CD8-positive, alpha-beta memory T cell (primary cell): ENCODE measurements at regions of chr19 and their contacts with region 1.

Region 1: DNA sequence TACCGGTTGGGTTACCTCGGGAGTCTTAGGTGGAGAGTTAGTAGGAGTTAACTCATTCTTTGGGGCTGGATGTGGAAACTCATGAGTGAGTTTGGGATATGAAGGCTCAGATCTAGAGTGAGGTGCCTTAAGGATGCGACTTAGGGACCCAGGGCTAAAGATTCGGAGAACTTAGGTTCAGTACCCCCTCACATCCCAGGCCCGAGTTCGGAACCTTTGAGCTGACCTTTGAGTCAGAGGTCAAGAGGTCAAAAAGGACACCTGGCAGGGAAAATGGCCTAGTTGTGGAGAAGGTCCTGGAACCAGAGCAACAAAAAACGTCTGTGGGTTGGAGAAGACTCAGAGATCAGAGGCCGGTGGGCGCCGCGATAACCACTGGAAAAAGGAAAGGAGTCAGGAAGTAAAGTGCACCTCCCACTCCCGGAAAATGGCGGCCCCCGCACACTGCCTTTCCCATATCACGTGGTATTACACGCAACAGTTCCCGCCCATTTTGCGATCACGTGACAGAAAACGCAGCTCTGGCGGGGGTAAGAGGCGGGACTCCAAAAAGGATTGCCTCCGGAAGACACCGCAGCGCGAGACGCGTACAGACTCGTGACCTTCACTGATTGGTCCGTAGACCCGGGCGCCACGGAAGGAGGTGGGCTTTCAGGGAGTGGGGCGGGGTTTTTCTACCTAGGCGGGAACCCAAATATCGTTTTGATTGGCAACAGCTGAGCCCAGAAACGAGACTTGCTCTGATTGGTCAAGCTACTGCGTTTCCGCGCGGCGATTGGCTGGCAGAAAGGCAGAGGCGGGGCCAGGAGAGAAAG is at the start of gene ACTMAP:
- DNase-seq: peak; percentile 98 to 100 (median 100)
- H3K4me3 ChIP-seq: peak within 1 kb of the TSS; percentile 83
- H3K4me3 Mint-ChIP-seq: peak within 1 kb of the TSS; percentile 94 to 99 (median 98)
- H3K27ac ChIP-seq: peak within 1 kb of the TSS; percentile 92
- H3K27ac Mint-ChIP-seq: peak within 1 kb of the TSS; percentile 95 to 100 (median 98)
- H3K4me1 ChIP-seq: peaks cover 30% of the 10 kb centered on the region
- H3K4me1 Mint-ChIP-seq: peaks cover 34 to 43% (median 40%) of the 10 kb centered on the region in 3 donors
- H3K27me3 ChIP-seq: no peaks in the 10 kb centered on the region
- H3K27me3 Mint-ChIP-seq: peaks cover 0 to 3% of the 10 kb centered on the region in 2 donors
- total RNA-seq, gene ACTMAP: 10.3 to 10.6 TPM

Region 2: GRCh38 chr19:40662921-40663694 is 87.2 kb before region 1 on chr19:
- CTCF ChIA-PET with region 1: interaction called, 13 read pairs
- POLR2A ChIA-PET with region 1: interaction called, 7 read pairs
- DNase-seq: peak; percentile 87 to 93 (median 89)
- H3K4me3 ChIP-seq: peak overlapping the region; percentile 71
- H3K4me3 Mint-ChIP-seq: peak overlapping the region; percentile 80 to 93 (median 85)
- H3K27ac ChIP-seq: peak overlapping the region; percentile 59
- H3K27ac Mint-ChIP-seq: peak overlapping the region; percentile 66 to 99 (median 89)
- H3K4me1 ChIP-seq: peaks cover 11% of the 10 kb centered on the region
- H3K4me1 Mint-ChIP-seq: peaks cover 6 to 16% (median 10%) of the 10 kb centered on the region in 3 donors
- H3K27me3 ChIP-seq: no peaks in the 10 kb centered on the region
- H3K27me3 Mint-ChIP-seq: peaks cover 2 to 6% of the 10 kb centered on the region in 2 donors

Region 3: DNA sequence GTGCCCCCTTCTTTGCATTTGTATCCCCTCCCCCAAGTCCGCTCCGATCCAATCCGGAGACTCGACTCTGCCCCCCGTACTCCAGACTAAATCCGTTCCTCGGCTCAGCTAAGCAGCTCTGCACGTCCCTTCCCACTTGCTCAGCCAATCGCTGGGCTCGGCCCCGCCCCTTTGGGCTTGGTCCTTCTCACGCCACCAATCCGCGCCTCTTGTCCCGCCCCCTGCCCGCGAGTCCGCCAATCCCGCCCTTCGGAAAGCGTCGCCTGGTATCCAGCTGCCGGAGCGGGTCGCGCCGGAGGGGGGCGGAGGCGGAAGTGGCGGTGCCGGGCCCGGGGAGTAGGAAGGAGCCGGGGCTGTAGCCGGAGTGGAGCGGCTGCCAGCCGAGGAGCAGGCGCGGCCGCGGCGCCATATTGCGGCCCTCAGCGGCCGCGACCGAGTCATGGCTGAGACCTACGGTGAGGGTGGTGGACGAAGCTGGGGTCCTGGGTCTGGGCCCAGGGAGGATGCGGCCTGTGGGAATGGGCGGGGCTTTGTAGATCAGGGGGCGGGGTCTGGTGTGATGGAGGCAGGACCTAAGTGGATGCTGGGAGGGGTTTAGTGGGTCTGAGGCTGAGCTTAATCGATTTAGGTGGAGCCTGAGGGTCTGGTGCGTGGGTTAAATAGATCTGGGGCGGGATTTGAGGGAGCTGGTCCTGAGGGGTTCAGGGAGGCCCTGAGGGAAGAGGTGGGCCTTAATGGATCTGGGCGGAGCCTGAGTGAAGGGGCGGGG is 27.9 kb after region 1 on chr19 and contains the start of gene RAB4B:
- CTCF ChIA-PET with region 1: interaction called, 18 read pairs
- POLR2A ChIA-PET with region 1: interaction called, 110 read pairs
- DNase-seq: peak; percentile 100
- H3K4me3 ChIP-seq: peak within 1 kb of the TSS; percentile 98
- H3K4me3 Mint-ChIP-seq: peak within 1 kb of the TSS; percentile 88 to 98 (median 92)
- H3K27ac ChIP-seq: peak within 1 kb of the TSS; percentile 95
- H3K27ac Mint-ChIP-seq: peak within 1 kb of the TSS; percentile 95 to 99 (median 98)
- H3K4me1 ChIP-seq: peaks cover 31% of the 10 kb centered on the region
- H3K4me1 Mint-ChIP-seq: peaks cover 33 to 46% (median 36%) of the 10 kb centered on the region in 3 donors
- H3K27me3 ChIP-seq: no peaks in the 10 kb centered on the region
- H3K27me3 Mint-ChIP-seq: peaks cover 0 to 1% of the 10 kb centered on the region in 2 donors
- total RNA-seq, gene RAB4B: 24.2 to 27.2 TPM

Region 4: GRCh38 chr19:40806488-40807468 is 56.5 kb after region 1 on chr19:
- CTCF ChIA-PET with region 1: interaction called, 23 read pairs
- POLR2A ChIA-PET with region 1: interaction called, 18 read pairs
- DNase-seq: peak; percentile 76 to 86 (median 83)
- H3K4me3 ChIP-seq: peak overlapping the region; percentile 46
- H3K4me3 Mint-ChIP-seq: peak overlapping the region; percentile 60 to 91 (median 82)
- H3K27ac ChIP-seq: peak overlapping the region; percentile 79
- H3K27ac Mint-ChIP-seq: peak overlapping the region; percentile 93 to 100 (median 98)
- H3K4me1 ChIP-seq: peaks cover 80% of the 10 kb centered on the region
- H3K4me1 Mint-ChIP-seq: peaks cover 76 to 86% (median 85%) of the 10 kb centered on the region in 3 donors
- H3K27me3 ChIP-seq: no peaks in the 10 kb centered on the region
- H3K27me3 Mint-ChIP-seq: no peaks in the 10 kb centered on the region

Region 5: GRCh38 chr19:40822161-40822560 is 71.9 kb after region 1 on chr19:
- CTCF ChIA-PET with region 1: interaction called, 16 read pairs
- POLR2A ChIA-PET with region 1: no interaction called
- DNase-seq: no peak
- H3K4me3 ChIP-seq: no peak overlapping the region
- H3K4me3 Mint-ChIP-seq: no peak overlapping the region
- H3K27ac ChIP-seq: no peak overlapping the region
- H3K27ac Mint-ChIP-seq: peak overlapping the region in 3 of 8 donors; percentile 3 to 84 (median 14)
- H3K4me1 ChIP-seq: peaks cover 33% of the 10 kb centered on the region
- H3K4me1 Mint-ChIP-seq: peaks cover 38 to 62% (median 48%) of the 10 kb centered on the region in 3 donors
- H3K27me3 ChIP-seq: no peaks in the 10 kb centered on the region
- H3K27me3 Mint-ChIP-seq: no peaks in the 10 kb centered on the region